Activated T-helper 1 cell treated with anti-CD3 and anti-CD28 coated beads, Interleukin-12 subunit alpha, Interleukin-12 subunit beta, Interleukin-2, Interleukin-4 antibody, amounts not matched to agents 30 ng/mL and 10 ng/mL and 1 ng/mL, durations not matched to agents 14 hours and 24 hours and 36 hours (primary cell): ENCODE measurements at regions of chr3 and their contacts with region 1.

Region 1: GRCh38 chr3:169764452-169765274 is at the start of gene TERC:
- DNase-seq: peak; percentile 85
- H3K4me3 Mint-ChIP-seq: peak within 1 kb of the TSS; percentile 96
- H3K27ac Mint-ChIP-seq: peak within 1 kb of the TSS; percentile 98
- H3K4me1 Mint-ChIP-seq: peaks cover 24% of the 10 kb centered on the region
- H3K27me3 Mint-ChIP-seq: peaks cover 5% of the 10 kb centered on the region
- total RNA-seq, gene TERC: 3.1 and 3.4 TPM in 2 replicates

Region 2: DNA sequence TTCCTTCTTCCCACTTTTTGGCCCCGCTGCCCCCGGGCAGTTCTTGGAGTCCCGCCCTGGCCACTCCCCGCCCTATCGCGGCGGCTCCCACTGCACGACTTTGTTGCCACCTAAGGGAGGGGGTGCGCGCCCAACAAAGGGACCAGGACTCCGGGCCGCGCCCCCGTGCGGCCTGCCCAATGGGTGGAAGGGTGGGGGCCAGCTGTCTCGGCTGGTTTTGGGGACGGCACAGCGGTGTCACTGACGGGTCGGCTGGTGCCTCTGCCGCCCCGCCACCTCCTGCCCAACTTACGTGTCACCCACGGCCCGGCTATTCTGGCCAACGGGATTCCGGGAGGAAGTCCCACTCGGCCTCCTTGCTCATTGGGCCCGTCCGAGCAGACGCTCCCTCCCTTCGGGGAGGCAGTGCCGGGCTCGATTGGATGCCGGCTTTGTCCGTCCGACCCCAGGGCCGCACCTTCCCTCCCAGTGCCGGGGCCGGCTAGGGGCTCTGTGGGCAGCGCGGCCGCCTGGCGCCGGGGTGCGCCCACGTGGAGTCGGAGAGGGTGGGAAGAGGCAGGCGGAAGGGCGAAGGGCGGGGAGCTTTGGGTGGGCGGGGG is 1669.0 kb before region 1 on chr3 and contains the start of gene GOLIM4:
- intact Hi-C with region 1: loop called (anchors 10 kb)
- DNase-seq: peak; percentile 42
- H3K4me3 Mint-ChIP-seq: peak within 1 kb of the TSS; percentile 90
- H3K27ac Mint-ChIP-seq: peak within 1 kb of the TSS; percentile 93
- H3K4me1 Mint-ChIP-seq: peaks cover 27% of the 10 kb centered on the region
- H3K27me3 Mint-ChIP-seq: peaks cover 35% of the 10 kb centered on the region
- total RNA-seq, gene GOLIM4: 8.4 and 8.8 TPM in 2 replicates

Region 3: DNA sequence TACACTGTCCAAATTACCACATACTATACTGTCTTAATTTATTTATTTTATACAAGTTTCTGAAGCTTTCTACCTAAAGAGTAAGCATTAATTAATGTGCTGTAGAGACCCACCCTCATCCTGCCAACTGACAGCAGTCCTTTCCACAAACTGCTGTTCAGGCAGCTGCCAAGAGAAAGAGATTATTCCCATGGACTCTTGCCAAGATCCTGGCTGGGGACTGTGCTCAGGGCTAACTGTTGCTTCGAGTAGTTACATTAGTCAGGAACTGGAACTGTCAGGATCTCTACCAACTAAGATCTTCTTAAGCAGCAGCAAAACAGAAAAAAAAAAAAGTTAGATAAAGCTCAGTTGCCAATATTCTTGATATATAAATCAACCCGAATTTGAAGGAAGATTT is 500.0 kb before region 1 on chr3:
- intact Hi-C with region 1: no loop called
- DNase-seq: no peak
- H3K4me3 Mint-ChIP-seq: no peak overlapping the region
- H3K27ac Mint-ChIP-seq: no peak overlapping the region
- H3K4me1 Mint-ChIP-seq: no peaks in the 10 kb centered on the region
- H3K27me3 Mint-ChIP-seq: peaks cover 4% of the 10 kb centered on the region

Region 4: GRCh38 chr3:169863458-169863899 is 98.8 kb after region 1 on chr3:
- intact Hi-C with region 1: loop called (anchors 1 kb)
- DNase-seq: peak; percentile 44
- H3K4me3 Mint-ChIP-seq: no peak overlapping the region
- H3K27ac Mint-ChIP-seq: no peak overlapping the region
- H3K4me1 Mint-ChIP-seq: peaks cover 24% of the 10 kb centered on the region
- H3K27me3 Mint-ChIP-seq: peaks cover 25% of the 10 kb centered on the region

Region 5: GRCh38 chr3:170037463-170038433 is 273.1 kb after region 1 on chr3 and contains the start of gene GPR160:
- intact Hi-C with region 1: loop called (anchors 2 kb)
- DNase-seq: peak; percentile 73
- H3K4me3 Mint-ChIP-seq: peak within 1 kb of the TSS; percentile 82
- H3K27ac Mint-ChIP-seq: peak within 1 kb of the TSS; percentile 42
- H3K4me1 Mint-ChIP-seq: peaks cover 24% of the 10 kb centered on the region
- H3K27me3 Mint-ChIP-seq: peaks cover 4% of the 10 kb centered on the region
- total RNA-seq, gene GPR160: 3.4 and 3.5 TPM in 2 replicates

Region 6: GRCh38 chr3:170277833-170278580 is 513.3 kb after region 1 on chr3:
- intact Hi-C with region 1: loop called (anchors 5 kb)
- DNase-seq: no peak
- H3K4me3 Mint-ChIP-seq: peak overlapping the region; percentile 83
- H3K27ac Mint-ChIP-seq: peak overlapping the region; percentile 86
- H3K4me1 Mint-ChIP-seq: peaks cover 30% of the 10 kb centered on the region
- H3K27me3 Mint-ChIP-seq: no peaks in the 10 kb centered on the region

Region 7: GRCh38 chr3:170869645-170870593 is 1105.3 kb after region 1 on chr3 and contains the start of gene RPL22L1:
- intact Hi-C with region 1: loop called (anchors 2 kb)
- DNase-seq: peak; percentile 90
- H3K4me3 Mint-ChIP-seq: peak within 1 kb of the TSS; percentile 98
- H3K27ac Mint-ChIP-seq: peak within 1 kb of the TSS; percentile 100
- H3K4me1 Mint-ChIP-seq: peaks cover 24% of the 10 kb centered on the region
- H3K27me3 Mint-ChIP-seq: peaks cover 4% of the 10 kb centered on the region
- total RNA-seq, gene RPL22L1: 123 and 145 TPM in 2 replicates